Dorsolateral prefrontal cortex (tissue), 120 donors: ENCODE measurements at regions of chr14 and their contacts with region 1.

Region 1: DNA sequence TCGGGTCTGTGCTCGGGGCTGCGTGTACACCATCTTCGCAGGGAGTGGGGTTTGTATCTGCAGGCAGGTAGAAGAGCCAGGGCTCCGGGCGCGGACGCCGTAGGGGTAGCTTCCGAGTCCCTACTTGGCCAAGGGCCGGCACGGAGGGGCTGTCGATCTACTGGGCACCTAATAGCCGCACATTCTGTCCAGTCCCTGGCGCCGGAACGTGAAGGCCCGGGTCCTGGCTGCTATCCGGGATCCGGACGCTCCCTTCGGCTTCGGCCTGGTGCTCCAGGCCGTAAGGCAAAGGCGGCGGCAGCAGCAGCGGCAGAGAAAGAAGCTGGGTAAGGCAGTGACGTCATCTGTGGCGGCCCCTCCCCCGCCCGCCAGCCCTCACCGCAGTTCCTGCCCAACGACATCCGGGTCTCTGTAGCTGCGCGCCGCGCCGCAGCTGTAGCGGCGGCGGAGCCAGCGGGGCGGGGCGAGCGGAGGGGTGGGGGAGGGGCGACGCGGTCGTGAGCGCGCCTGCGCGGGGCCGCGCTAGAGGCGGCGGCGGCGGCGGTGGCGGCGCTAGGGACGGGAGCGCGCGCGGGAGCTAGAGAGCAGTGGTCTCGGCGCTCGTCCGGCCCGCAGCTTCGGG is at the start of gene PPM1A:
- DNase-seq: peak; percentile 86 to 96 (median 93)
- H3K4me3 ChIP-seq: peak within 1 kb of the TSS; percentile 71 to 100 (median 89)
- H3K27ac ChIP-seq: peak within 1 kb of the TSS; percentile 95 to 100 (median 100)
- H3K27me3 ChIP-seq: no peaks in the 10 kb centered on the region
- CTCF ChIP-seq: peak in 6 of 56 donors; percentile 10 to 43 (median 16)
- total RNA-seq, gene PPM1A: 67.6 to 145 (median 112) TPM

Region 2: DNA sequence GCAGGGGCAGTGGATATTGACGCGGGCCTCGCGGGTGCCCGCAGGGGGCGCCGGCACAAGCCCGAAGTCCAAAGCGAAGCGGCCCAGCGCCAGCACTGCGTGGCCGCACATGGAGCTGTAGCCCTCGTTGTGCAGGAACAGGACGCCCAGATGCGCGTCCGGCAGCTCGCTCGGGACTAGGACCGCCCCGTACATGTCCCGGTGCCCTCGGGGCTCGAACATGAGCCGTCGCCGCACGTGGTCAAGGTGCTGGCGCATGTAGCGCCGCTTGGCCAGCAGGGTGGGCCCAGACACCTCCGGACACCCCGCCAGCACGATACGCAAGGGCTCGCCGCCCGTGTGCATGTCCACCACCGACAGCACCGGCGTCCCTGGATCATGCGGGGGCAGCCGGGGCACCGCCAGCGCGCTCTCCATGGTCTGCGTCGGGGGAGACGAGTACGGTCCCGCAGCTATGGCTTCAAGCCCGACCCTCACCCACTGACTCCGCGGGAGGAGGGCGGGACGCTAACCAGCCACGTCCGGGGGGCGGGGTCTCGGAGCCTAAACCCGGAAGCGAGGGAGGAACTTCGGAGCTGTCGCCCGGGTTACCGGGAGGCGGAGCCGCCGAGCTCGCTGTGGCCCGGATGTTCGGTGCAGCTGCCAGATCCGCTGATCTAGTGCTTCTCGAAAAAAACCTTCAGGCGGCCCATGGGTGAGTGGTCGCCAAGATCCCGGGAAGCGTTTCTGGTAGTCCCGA is 764.7 kb before region 1 on chr14 and contains the starts of genes JKAMP and L3HYPDH:
- intact Hi-C with region 1: loop called in 1 of 2 experiments (anchors 5 kb)
- DNase-seq: peak; percentile 95 to 98 (median 95)
- H3K4me3 ChIP-seq: peak within 1 kb of the TSS; percentile 70 to 98 (median 92)
- H3K27ac ChIP-seq: peak within 1 kb of the TSS; percentile 82 to 99 (median 96)
- H3K27me3 ChIP-seq: no peaks in the 10 kb centered on the region
- CTCF ChIP-seq: peak; percentile 39 to 84 (median 68)
- total RNA-seq, gene JKAMP: 25.5 to 66.0 (median 46.4) TPM
- total RNA-seq, gene L3HYPDH: 23.2 to 57.8 (median 38.6) TPM

Region 3: GRCh38 chr14:60184146-60184904 is 64.5 kb before region 1 on chr14:
- intact Hi-C with region 1: loop called in 1 of 2 experiments (anchors 5 kb)
- DNase-seq: no peak
- H3K4me3 ChIP-seq: peak overlapping the region; percentile 20 to 71 (median 54)
- H3K27ac ChIP-seq: peak overlapping the region in 37 of 59 donors; percentile 3 to 77 (median 42)
- H3K27me3 ChIP-seq: no peaks in the 10 kb centered on the region
- CTCF ChIP-seq: peak; percentile 69 to 98 (median 88)

Region 4: DNA sequence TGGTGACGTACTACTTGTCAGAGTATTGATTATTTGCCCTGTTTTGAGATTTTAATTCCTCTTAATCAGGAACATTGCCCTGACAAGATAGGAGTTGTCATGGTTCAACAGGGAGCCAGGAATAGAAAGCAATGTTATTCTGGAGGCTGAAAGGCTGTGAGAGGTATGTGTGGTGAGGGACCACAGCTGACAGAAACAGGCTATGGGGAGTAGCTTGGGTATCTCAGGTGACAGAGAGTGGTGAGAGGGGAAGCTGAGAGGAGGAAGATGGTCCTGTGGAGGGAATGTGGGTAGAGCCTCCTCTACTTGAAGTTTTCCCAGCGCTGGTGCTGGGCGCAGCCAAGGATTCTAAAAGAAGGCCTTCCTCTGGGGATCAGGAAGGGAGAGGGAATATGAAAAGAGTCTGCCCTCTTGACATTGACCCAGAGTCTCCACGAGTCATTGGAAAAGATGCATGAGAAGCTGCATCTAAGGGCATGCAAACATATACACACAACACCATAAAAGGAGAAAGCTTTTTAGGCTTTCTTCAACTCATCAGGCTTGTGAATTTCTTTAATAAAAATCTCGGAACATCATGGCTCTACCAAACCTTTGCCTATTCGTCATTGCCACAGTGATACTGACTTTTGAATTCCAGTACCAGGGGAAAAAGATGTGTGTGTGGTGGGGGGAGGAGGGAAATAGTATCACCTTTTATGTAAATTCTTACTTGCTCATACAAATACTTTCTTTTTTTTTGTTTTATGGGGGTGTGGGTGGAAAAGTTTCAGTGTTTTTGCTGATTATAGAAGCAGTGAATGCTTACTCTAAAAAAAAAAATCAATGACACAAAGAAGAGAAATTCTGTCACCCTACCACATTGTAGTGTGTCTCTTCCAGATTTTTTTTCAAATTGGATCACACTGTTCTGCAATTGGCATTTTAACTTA is 43.7 kb before region 1 on chr14:
- intact Hi-C with region 1: no loop called
- DNase-seq: no peak
- H3K4me3 ChIP-seq: no peak overlapping the region
- H3K27ac ChIP-seq: no peak overlapping the region
- H3K27me3 ChIP-seq: no peaks in the 10 kb centered on the region
- CTCF ChIP-seq: no peak

Region 5: GRCh38 chr14:60222783-60223182 is 26.0 kb before region 1 on chr14:
- intact Hi-C with region 1: loop called in 1 of 2 experiments (anchors 2 kb)
- DNase-seq: peak; percentile 34 to 92 (median 84)
- H3K4me3 ChIP-seq: peak overlapping the region in 9 of 59 donors; percentile 3 to 23 (median 9)
- H3K27ac ChIP-seq: peak overlapping the region in 43 of 59 donors; percentile 2 to 82 (median 54)
- H3K27me3 ChIP-seq: no peaks in the 10 kb centered on the region
- CTCF ChIP-seq: peak in 6 of 56 donors; percentile 7 to 33 (median 17)

Region 6: GRCh38 chr14:60420050-60420449 is 171.2 kb after region 1 on chr14:
- intact Hi-C with region 1: no loop called
- DNase-seq: no peak
- H3K4me3 ChIP-seq: no peak overlapping the region
- H3K27ac ChIP-seq: no peak overlapping the region
- H3K27me3 ChIP-seq: peaks cover 0 to 2% (median 0%) of the 10 kb centered on the region in 45 donors
- CTCF ChIP-seq: no peak

Region 7: DNA sequence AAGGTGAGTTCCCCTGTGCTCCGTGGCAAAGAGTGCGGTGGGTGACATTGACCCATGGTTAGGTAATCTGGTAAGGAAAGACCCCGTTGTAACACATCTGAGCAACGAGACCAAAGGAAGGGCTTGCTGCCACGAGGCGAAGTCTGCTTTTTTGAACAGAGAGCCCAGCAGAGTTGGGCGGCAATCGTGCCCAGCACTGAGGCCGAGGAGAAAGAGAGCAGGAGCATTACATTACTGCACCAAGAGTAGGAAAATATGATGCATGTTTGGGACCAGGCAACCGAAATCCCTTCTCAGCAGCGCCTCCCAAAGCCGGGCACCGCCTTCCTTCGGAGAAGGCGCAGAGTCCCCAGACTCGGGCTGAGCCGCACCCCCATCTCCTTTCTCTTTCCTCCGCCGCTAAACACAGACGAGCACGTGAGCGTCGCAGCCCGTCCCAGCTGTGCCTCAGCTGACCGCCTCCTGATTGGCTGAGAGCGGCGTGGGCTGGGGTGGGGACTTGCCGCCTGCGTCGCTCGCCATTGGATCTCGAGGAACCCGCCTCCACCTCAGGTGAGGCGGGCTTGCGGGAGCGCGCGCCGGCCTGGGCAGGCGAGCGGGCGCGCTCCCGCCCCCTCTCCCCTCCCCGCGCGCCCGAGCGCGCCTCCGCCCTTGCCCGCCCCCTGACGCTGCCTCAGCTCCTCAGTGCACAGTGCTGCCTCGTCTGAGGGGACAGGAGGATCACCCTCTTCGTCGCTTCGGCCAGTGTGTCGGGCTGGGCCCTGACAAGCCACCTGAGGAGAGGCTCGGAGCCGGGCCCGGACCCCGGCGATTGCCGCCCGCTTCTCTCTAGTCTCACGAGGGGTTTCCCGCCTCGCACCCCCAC is 1446.3 kb after region 1 on chr14 and contains the start of gene HIF1A:
- intact Hi-C with region 1: loop called in 1 of 2 experiments (anchors 10 kb)
- DNase-seq: peak; percentile 83 to 97 (median 94)
- H3K4me3 ChIP-seq: peak within 1 kb of the TSS; percentile 72 to 100 (median 96)
- H3K27ac ChIP-seq: peak within 1 kb of the TSS; percentile 68 to 100 (median 97)
- H3K27me3 ChIP-seq: no peaks in the 10 kb centered on the region
- CTCF ChIP-seq: peak in 43 of 56 donors; percentile 4 to 62 (median 32)
- total RNA-seq, gene HIF1A: 54.8 to 115 (median 81.7) TPM